ENCODE measurements at regions of chr4 and their contacts with region 1.

Region 1: DNA sequence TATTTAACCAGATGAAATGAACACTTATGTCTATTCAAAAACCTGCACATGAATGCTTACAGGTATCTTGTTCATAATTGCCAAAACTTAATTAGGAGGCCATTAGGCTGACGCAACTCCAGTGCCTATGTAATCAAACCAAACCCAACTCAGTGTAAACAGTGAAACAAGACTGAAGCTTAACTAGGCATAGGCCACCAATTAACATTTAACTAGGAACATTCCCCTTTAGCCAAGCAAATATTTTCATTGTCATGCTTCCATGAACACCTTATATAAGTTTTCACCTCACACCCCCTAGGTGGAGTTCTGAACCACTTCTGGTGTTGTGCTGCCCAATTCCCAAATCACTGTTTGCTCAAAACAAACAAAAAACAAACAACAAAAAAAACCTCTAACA is 686.0 kb downstream of the STPG2 start:
- DNase-seq: no peak
- H3K4me3 ChIP-seq: no peak overlapping the region
- H3K27ac ChIP-seq: no peak overlapping the region
- H3K4me1 ChIP-seq: no peaks in the 10 kb centered on the region
- H3K27me3 ChIP-seq: no peaks in the 10 kb centered on the region
- CTCF ChIP-seq: no peak
- POLR2A ChIP-seq: no peak

Region 2: DNA sequence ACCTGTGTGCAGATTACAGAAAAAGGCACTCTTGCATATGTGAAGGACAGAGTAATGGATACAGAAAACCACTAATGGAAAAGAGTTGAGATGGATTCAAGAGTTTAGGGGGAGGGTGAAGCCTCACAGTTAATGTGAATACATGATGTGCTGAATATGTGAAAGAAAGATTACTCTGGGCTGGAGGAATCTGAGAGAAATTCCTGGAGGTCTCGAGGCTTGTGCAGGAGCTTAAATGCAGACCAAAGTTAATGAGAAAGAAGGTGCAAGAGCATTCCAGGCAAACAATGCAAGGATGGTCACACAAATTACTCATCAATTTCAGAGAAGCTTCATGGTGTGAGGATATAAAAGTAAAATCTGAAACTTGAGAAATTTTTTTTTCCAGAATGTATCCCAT is 82.7 kb before region 1 on chr4:
- intact Hi-C with region 1: no loop called
- DNase-seq: no peak
- H3K4me3 ChIP-seq: no peak overlapping the region
- H3K27ac ChIP-seq: no peak overlapping the region
- H3K4me1 ChIP-seq: no peaks in the 10 kb centered on the region
- H3K27me3 ChIP-seq: no peaks in the 10 kb centered on the region
- CTCF ChIP-seq: no peak
- POLR2A ChIP-seq: no peak

Region 3: GRCh38 chr4:98890702-98891455 is 1433.6 kb after region 1 on chr4:
- intact Hi-C with region 1: loop called (anchors 5 kb)
- DNase-seq: no peak
- H3K4me3 ChIP-seq: no peak overlapping the region
- H3K27ac ChIP-seq: no peak overlapping the region
- H3K4me1 ChIP-seq: peaks cover 13% of the 10 kb centered on the region
- H3K27me3 ChIP-seq: no peaks in the 10 kb centered on the region
- CTCF ChIP-seq: no peak
- POLR2A ChIP-seq: no peak